ENCODE measurements at regions of chr7 and their contacts with region 1.

Region 1: GRCh38 chr7:76302347-76303201 is at the start of gene HSPB1:
- DNase-seq: peak; percentile 61 to 82 (median 65)
- H3K4me3 ChIP-seq: peak within 1 kb of the TSS; percentile 61 to 63
- H3K4me3 Mint-ChIP-seq: peak within 1 kb of the TSS; percentile 90 to 97 (median 92)
- H3K27ac ChIP-seq: peak within 1 kb of the TSS; percentile 62
- H3K27ac Mint-ChIP-seq: peak within 1 kb of the TSS; percentile 88 to 96 (median 93)
- H3K4me1 ChIP-seq: peaks cover 6% of the 10 kb centered on the region
- H3K4me1 Mint-ChIP-seq: peaks cover 11 to 24% (median 15%) of the 10 kb centered on the region in 4 donors
- H3K27me3 ChIP-seq: no peaks in the 10 kb centered on the region
- H3K27me3 Mint-ChIP-seq: no peaks in the 10 kb centered on the region
- total RNA-seq, gene HSPB1: 41.9 to 43.1 TPM

Region 2: GRCh38 chr7:76234931-76235441 is 67.6 kb before region 1 on chr7:
- CTCF ChIA-PET with region 1: no interaction called
- POLR2A ChIA-PET with region 1: no interaction called
- intact Hi-C with region 1: no loop called
- DNase-seq: peak; percentile 38 to 64 (median 47)
- H3K4me3 ChIP-seq: no peak overlapping the region
- H3K4me3 Mint-ChIP-seq: peak overlapping the region; percentile 40 to 76 (median 70)
- H3K27ac ChIP-seq: no peak overlapping the region
- H3K27ac Mint-ChIP-seq: peak overlapping the region in 1 of 7 donors; percentile 35
- H3K4me1 ChIP-seq: peaks cover 5% of the 10 kb centered on the region
- H3K4me1 Mint-ChIP-seq: peaks cover 2 to 10% (median 6%) of the 10 kb centered on the region in 4 donors
- H3K27me3 ChIP-seq: no peaks in the 10 kb centered on the region
- H3K27me3 Mint-ChIP-seq: peaks cover 33 to 54% of the 10 kb centered on the region in 2 donors

Region 3: GRCh38 chr7:76260171-76260703 is 42.3 kb before region 1 on chr7:
- CTCF ChIA-PET with region 1: no interaction called
- POLR2A ChIA-PET with region 1: no interaction called
- intact Hi-C with region 1: loop called (anchors 2 kb)
- DNase-seq: peak in 3 of 5 donors; percentile 21 to 63 (median 22)
- H3K4me3 ChIP-seq: no peak overlapping the region
- H3K4me3 Mint-ChIP-seq: peak overlapping the region in 1 of 8 donors; percentile 29
- H3K27ac ChIP-seq: no peak overlapping the region
- H3K27ac Mint-ChIP-seq: no peak overlapping the region
- H3K4me1 ChIP-seq: no peaks in the 10 kb centered on the region
- H3K4me1 Mint-ChIP-seq: peaks cover 0 to 8% (median 0%) of the 10 kb centered on the region in 4 donors
- H3K27me3 ChIP-seq: peaks cover 5% of the 10 kb centered on the region
- H3K27me3 Mint-ChIP-seq: peaks cover 21 to 23% of the 10 kb centered on the region in 2 donors

Region 4: DNA sequence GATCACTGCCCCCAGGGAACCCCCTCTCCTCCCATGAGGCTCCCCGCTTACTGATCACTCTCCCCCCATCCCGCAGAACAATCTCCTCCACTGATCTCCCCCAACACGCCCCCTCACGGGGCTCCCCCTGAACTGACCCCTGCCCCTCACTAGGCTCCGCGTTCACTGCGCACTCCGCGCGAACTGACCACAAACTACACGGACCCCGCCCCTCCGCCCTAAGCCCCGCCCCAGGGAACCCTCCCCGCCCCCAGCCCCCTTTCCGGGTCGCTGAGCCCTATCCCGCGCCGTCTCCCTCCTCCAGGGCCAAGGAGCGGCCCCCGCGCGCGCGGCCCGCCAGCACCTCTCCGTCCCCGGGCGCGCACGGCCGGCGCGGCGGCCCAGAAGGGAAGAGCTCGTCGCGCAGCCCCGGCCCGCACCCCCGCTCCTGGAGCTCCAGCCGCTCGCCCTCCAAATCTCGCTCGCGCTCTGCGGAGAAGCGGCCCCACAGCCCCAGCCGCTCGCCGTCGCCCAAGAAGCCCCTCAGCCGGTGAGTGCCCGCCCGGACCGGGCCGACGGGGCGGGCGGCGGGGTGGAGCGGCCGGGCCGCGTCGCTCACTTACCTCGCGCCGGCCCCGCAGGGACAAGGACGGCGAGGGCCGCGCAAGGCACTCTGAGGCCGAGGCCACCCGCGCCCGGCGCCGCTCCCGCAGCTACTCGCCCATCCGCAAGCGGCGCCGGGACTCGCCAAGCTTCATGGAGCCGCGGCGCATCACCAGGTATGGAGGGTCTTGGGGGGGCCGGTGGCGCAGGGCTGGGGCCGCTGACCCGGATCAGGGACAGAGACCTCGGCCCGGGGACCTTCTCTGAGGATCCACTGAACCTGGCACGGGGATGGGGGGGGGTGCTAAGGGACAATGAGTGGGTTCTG is 20.0 kb before region 1 on chr7:
- CTCF ChIA-PET with region 1: interaction called, 5 read pairs
- POLR2A ChIA-PET with region 1: interaction called, 3 read pairs
- intact Hi-C with region 1: loop called (anchors 2 kb)
- DNase-seq: no peak
- H3K4me3 ChIP-seq: peak overlapping the region in 1 of 2 donors; percentile 14
- H3K4me3 Mint-ChIP-seq: peak overlapping the region in 7 of 8 donors; percentile 73 to 86 (median 81)
- H3K27ac ChIP-seq: no peak overlapping the region
- H3K27ac Mint-ChIP-seq: no peak overlapping the region
- H3K4me1 ChIP-seq: peaks cover 13% of the 10 kb centered on the region
- H3K4me1 Mint-ChIP-seq: peaks cover 6 to 17% (median 15%) of the 10 kb centered on the region in 4 donors
- H3K27me3 ChIP-seq: peaks cover 16% of the 10 kb centered on the region
- H3K27me3 Mint-ChIP-seq: peaks cover 20 to 25% of the 10 kb centered on the region in 2 donors

Measured in CD4-positive, alpha-beta memory T cell (primary cell).